ENCODE measurements at regions of chr1 and their contacts with region 1.

Region 1: DNA sequence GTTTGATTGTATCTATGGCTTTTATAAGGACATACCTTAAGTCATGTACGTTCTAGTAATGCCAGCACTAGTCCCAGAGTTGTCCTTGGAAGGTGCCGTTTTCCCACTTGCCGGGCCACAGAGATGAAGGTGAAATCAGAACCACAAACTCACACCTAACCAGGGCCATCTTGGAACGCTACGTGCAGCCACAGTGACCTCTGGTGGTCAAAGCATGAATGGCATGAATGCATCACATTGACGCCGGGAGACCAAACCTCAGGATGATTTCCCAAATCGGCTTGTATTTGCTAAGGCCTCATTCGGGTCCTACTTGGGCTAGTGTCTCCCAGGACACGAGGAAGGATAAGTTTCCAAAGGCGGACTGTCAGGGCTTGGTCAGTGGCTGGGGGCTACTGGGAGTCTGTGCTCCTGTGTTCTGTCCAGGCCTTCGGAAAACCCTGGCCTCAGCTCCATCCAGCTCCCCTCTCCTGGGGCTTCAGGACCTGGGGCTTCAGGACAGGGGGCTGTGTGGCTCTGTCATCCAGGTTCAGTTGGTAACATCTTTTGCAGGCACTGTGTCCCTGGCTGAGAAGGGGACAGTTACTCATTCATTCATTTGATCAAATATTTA is 260.5 kb downstream of the PRDM2 start:
- DNase-seq: peak; percentile 77
- ATAC-seq: peak; percentile 47
- H3K4me3 Mint-ChIP-seq: no peak overlapping the region
- H3K27ac Mint-ChIP-seq: no peak overlapping the region
- H3K4me1 Mint-ChIP-seq: no peaks in the 10 kb centered on the region
- H3K27me3 Mint-ChIP-seq: peaks cover 24% of the 10 kb centered on the region
- CTCF ChIP-seq: peak; percentile 93

Region 2: GRCh38 chr1:13667691-13668090 is 292.8 kb before region 1 on chr1:
- CTCF ChIA-PET with region 1: interaction called, 7 read pairs
- POLR2A ChIA-PET with region 1: no interaction called
- intact Hi-C with region 1: loop called (anchors 5 kb)
- DNase-seq: no peak
- ATAC-seq: no peak
- H3K4me3 Mint-ChIP-seq: no peak overlapping the region
- H3K27ac Mint-ChIP-seq: no peak overlapping the region
- H3K4me1 Mint-ChIP-seq: peaks cover 6% of the 10 kb centered on the region
- H3K27me3 Mint-ChIP-seq: no peaks in the 10 kb centered on the region
- CTCF ChIP-seq: no peak

Region 3: GRCh38 chr1:13828454-13829151 is 131.9 kb before region 1 on chr1:
- CTCF ChIA-PET with region 1: interaction called, 16 read pairs
- POLR2A ChIA-PET with region 1: no interaction called
- intact Hi-C with region 1: loop called (anchors 2 kb)
- DNase-seq: peak; percentile 66
- ATAC-seq: peak; percentile 89
- H3K4me3 Mint-ChIP-seq: no peak overlapping the region
- H3K27ac Mint-ChIP-seq: no peak overlapping the region
- H3K4me1 Mint-ChIP-seq: peaks cover 3% of the 10 kb centered on the region
- H3K27me3 Mint-ChIP-seq: no peaks in the 10 kb centered on the region
- CTCF ChIP-seq: peak; percentile 65

Measured in activated CD8-positive, alpha-beta T cell treated with anti-CD3 and anti-CD28 coated beads for 36 hours (primary cell).